WTC11 (cell line): ENCODE measurements at regions of chr11 and their contacts with region 1.

Region 1: GRCh38 chr11:58524232-58525036 is 16.5 kb upstream of the OR5B21 start:
- DNase-seq: peak; percentile 68
- ATAC-seq: peak; percentile 99
- H3K4me3 Mint-ChIP-seq: peak overlapping the region; percentile 60
- H3K27ac Mint-ChIP-seq: peak overlapping the region; percentile 63
- H3K4me1 Mint-ChIP-seq: peaks cover 8% of the 10 kb centered on the region
- H3K27me3 Mint-ChIP-seq: no peaks in the 10 kb centered on the region; the same call in 1 of the 2 replicates
- CTCF ChIP-seq: peak; percentile 70

Region 2: GRCh38 chr11:57815877-57816276 is 708.6 kb before region 1 on chr11:
- CTCF ChIA-PET with region 1: interaction called, 13 read pairs
- POLR2A ChIA-PET with region 1: no interaction called
- DNase-seq: no peak
- ATAC-seq: no peak
- H3K4me3 Mint-ChIP-seq: no peak overlapping the region
- H3K27ac Mint-ChIP-seq: 0 out of 2 replicates have a peak overlapping the region, but pooled peaks have one; percentile 13
- H3K4me1 Mint-ChIP-seq: no peaks in the 10 kb centered on the region
- H3K27me3 Mint-ChIP-seq: no peaks in the 10 kb centered on the region
- CTCF ChIP-seq: no peak

Region 3: GRCh38 chr11:58059007-58059350 is 465.5 kb before region 1 on chr11:
- CTCF ChIA-PET with region 1: interaction called, 12 read pairs
- POLR2A ChIA-PET with region 1: no interaction called
- DNase-seq: no peak
- ATAC-seq: peak; percentile 51
- H3K4me3 Mint-ChIP-seq: no peak overlapping the region
- H3K27ac Mint-ChIP-seq: 0 out of 2 replicates have a peak overlapping the region, but pooled peaks have one; percentile 49
- H3K4me1 Mint-ChIP-seq: peaks cover 47% of the 10 kb centered on the region
- H3K27me3 Mint-ChIP-seq: no peaks in the 10 kb centered on the region
- CTCF ChIP-seq: no peak

Region 4: DNA sequence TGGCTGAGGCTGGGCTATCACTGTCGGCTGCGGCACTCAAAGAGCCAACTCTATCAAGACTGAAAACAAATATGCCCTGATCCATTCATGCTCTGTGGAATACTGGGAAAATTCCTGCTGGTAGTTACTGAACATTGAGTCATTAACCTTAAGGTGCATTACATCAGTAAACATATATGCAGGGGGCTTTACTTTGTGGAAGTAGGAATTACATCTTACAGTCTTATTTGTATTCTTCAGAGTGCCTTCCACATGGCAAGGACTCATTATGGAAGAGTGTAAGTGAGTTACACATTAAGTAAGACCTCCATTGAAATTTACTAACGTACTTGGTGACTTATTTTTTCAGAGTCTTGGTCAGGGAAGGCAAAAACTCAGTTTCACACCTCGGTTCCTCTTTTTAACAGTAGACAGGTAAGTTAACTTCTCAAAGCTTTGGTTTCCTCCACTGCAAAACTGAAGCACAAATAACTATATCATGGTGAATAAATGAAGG is 21.0 kb before region 1 on chr11:
- CTCF ChIA-PET with region 1: interaction called, 16 read pairs
- POLR2A ChIA-PET with region 1: no interaction called
- DNase-seq: no peak
- ATAC-seq: no peak
- H3K4me3 Mint-ChIP-seq: no peak overlapping the region
- H3K27ac Mint-ChIP-seq: no peak overlapping the region
- H3K4me1 Mint-ChIP-seq: peaks cover 4% of the 10 kb centered on the region; the same call in 1 of the 2 replicates
- H3K27me3 Mint-ChIP-seq: no peaks in the 10 kb centered on the region; the same call in 1 of the 2 replicates
- CTCF ChIP-seq: no peak

Region 5: GRCh38 chr11:58549644-58550043 is 25.2 kb after region 1 on chr11:
- CTCF ChIA-PET with region 1: interaction called, 11 read pairs
- POLR2A ChIA-PET with region 1: no interaction called
- DNase-seq: no peak
- ATAC-seq: no peak
- H3K4me3 Mint-ChIP-seq: no peak overlapping the region
- H3K27ac Mint-ChIP-seq: no peak overlapping the region
- H3K4me1 Mint-ChIP-seq: no peaks in the 10 kb centered on the region
- H3K27me3 Mint-ChIP-seq: no peaks in the 10 kb centered on the region
- CTCF ChIP-seq: no peak

Region 6: DNA sequence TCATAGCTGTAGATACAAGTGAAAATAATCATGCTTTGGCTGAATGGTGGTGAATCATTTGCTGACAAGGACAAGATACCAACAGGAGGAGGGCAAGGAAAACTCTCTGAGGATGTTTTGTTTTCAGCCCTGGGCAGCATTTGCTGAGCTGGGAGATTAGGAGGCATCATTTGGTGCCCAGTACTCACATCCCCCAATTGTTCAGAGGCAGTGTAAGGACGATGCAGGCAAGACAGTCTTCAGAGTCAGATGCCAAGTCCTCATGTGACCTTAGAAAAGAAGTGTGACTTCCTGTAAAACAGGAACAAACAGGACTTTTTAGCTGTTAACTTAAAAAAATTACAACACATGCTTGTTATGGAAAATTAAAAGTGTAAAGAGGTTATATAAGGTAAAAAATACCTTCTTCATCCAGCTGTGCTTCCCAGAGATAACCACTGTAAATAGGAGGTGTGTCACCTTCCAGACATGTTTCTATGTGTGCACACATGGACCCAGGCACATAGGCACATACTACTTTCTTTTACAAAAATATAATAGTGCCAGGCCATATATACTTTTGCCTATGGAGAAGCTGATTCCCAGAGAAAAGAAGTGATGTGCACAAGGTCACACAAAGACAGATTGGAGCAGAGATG is 116.1 kb after region 1 on chr11:
- CTCF ChIA-PET with region 1: no interaction called
- POLR2A ChIA-PET with region 1: no interaction called
- DNase-seq: no peak
- ATAC-seq: no peak
- H3K4me3 Mint-ChIP-seq: no peak overlapping the region
- H3K27ac Mint-ChIP-seq: no peak overlapping the region
- H3K4me1 Mint-ChIP-seq: no peaks in the 10 kb centered on the region
- H3K27me3 Mint-ChIP-seq: no peaks in the 10 kb centered on the region
- CTCF ChIP-seq: no peak

Region 7: GRCh38 chr11:58900479-58901420 is 376.3 kb after region 1 on chr11:
- CTCF ChIA-PET with region 1: interaction called, 14 read pairs
- POLR2A ChIA-PET with region 1: no interaction called
- DNase-seq: peak; percentile 96
- ATAC-seq: peak; percentile 77
- H3K4me3 Mint-ChIP-seq: peak overlapping the region; percentile 62
- H3K27ac Mint-ChIP-seq: peak overlapping the region; percentile 42; the same call in 1 of the 2 replicates
- H3K4me1 Mint-ChIP-seq: peaks cover 45% of the 10 kb centered on the region
- H3K27me3 Mint-ChIP-seq: peaks cover 48% of the 10 kb centered on the region
- CTCF ChIP-seq: peak; percentile 59; the same call in 1 of the 2 replicates